ENCODE measurements at regions of chr3 and their contacts with region 1.

Region 1: GRCh38 chr3:39447637-39448483 is 19.6 kb upstream of the MOBP start:
- DNase-seq: peak; percentile 86 to 87
- H3K4me3 ChIP-seq: no peak overlapping the region
- H3K4me1 ChIP-seq: peaks cover 6% of the 10 kb centered on the region
- H3K27me3 ChIP-seq: no peaks in the 10 kb centered on the region

Region 2: GRCh38 chr3:39499651-39500240 is 51.9 kb after region 1 on chr3:
- in situ Hi-C with region 1: loop called (anchors 5 kb)
- DNase-seq: no peak
- H3K4me3 ChIP-seq: no peak overlapping the region
- H3K4me1 ChIP-seq: no peaks in the 10 kb centered on the region
- H3K27me3 ChIP-seq: peaks cover 2% of the 10 kb centered on the region; the same call in 1 of the 2 replicates

Region 3: GRCh38 chr3:40309418-40309924 is 861.6 kb after region 1 on chr3 and contains the start of gene EIF1B:
- in situ Hi-C with region 1: loop called (anchors 25 kb)
- DNase-seq: peak; percentile 94 to 98
- H3K4me3 ChIP-seq: peak within 1 kb of the TSS; percentile 92
- H3K4me1 ChIP-seq: peaks cover 16% of the 10 kb centered on the region
- H3K27me3 ChIP-seq: no peaks in the 10 kb centered on the region